Naive thymus-derived CD8-positive, alpha-beta T cell (primary cell): ENCODE measurements at regions of chr2 and their contacts with region 1.

Region 1: DNA sequence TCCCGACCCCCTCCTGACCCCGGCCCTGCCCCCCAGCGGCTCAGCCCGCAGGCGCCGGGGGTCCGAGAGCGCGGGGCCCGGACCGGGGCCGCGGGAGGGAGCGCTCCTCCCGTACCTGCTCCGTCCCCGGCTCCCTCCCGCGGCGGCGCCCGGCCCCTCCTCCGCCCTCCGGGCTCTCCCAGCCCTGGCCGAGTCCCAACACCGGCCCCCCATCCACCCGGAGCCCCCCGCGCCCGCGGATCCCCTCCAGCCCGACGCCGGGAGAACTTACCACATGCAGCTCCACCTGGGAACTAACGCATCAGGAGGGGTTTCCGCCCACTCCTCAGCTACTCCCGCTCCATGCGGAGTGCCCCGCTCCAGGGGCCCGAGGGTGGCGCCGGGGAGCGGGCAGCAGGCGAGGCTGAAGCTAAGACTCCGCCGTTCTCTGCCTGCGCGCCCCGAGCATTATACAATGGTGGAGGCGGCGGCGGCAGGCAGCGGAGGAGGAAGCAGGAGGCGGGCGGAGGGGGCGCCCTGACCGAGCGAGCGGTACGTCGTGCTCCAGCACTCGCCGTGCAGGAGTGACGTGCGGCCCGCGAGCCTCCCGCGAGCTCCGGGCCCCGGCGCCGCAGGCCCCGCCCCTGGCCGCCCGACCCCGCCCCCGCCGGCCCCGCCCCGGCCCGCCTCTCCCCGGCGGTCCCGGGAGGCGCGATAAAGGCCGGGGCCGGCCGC is at the start of gene SERTAD2:
- DNase-seq: peak; percentile 83 to 94 (median 86)
- ATAC-seq: peak; percentile 86 to 87
- H3K4me3 Mint-ChIP-seq: peak within 1 kb of the TSS; percentile 85 to 98 (median 92)
- H3K27ac Mint-ChIP-seq: peak within 1 kb of the TSS; percentile 82 to 98 (median 94)
- H3K4me1 Mint-ChIP-seq: peaks cover 37 to 83% (median 76%) of the 10 kb centered on the region in 4 donors
- H3K27me3 Mint-ChIP-seq: no peaks in the 10 kb centered on the region
- polyA plus RNA-seq, gene SERTAD2: 5.5 to 9.2 (median 6.1) TPM

Region 2: DNA sequence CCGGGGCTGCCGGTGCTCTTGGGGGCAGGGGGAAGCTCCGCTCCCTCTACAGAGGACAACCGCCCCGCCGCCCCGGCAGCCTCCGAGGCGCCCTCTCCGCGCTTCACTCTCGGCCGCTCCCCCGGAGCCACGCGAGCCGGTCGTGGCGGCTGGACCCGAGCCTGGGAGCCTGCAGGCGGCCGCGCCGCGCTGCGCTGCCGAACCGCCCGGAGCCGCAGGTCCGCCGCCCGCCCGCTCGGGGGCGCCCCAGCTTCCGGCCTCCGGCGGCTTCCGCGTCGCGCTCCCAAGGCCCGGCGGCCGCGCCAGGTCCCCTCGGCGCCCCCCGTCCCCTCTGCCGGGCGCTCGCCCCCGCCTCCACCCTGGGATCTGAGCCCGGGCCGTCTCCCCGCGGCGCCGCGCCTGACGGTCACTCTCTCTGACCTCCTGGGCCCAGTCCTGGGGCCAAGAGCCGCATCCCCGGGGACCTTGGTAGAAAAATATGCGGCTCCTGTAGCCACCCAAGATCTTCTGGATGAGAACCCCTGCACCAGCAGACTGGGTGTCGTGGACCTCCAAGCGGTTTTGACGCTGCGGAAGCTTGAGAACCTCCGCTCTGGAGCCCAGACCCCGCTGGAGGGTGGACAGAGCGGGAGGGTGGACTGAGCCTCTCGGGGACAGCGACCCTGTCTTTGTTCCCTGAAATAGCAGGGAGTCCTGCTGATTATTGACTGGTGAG is 44.1 kb before region 1 on chr2:
- POLR2A ChIA-PET with region 1: interaction called, 42 read pairs
- DNase-seq: peak; percentile 47 to 80 (median 74)
- ATAC-seq: peak; percentile 67 to 84
- H3K4me3 Mint-ChIP-seq: peak overlapping the region; percentile 61 to 89 (median 78)
- H3K27ac Mint-ChIP-seq: peak overlapping the region; percentile 60 to 90 (median 80)
- H3K4me1 Mint-ChIP-seq: peaks cover 4 to 30% (median 25%) of the 10 kb centered on the region in 4 donors
- H3K27me3 Mint-ChIP-seq: no peaks in the 10 kb centered on the region

Region 3: GRCh38 chr2:64666810-64667438 is 13.4 kb after region 1 on chr2:
- POLR2A ChIA-PET with region 1: interaction called, 240 read pairs
- DNase-seq: peak in 2 of 10 donors; percentile 40 to 43
- ATAC-seq: peak; percentile 83 to 85
- H3K4me3 Mint-ChIP-seq: peak overlapping the region in 9 of 10 donors; percentile 11 to 78 (median 59)
- H3K27ac Mint-ChIP-seq: peak overlapping the region in 4 of 10 donors; percentile 26 to 91 (median 84)
- H3K4me1 Mint-ChIP-seq: peaks cover 28 to 51% (median 37%) of the 10 kb centered on the region in 4 donors
- H3K27me3 Mint-ChIP-seq: no peaks in the 10 kb centered on the region

Region 4: GRCh38 chr2:64695721-64696261 is 42.3 kb after region 1 on chr2:
- POLR2A ChIA-PET with region 1: interaction called, 16 read pairs
- DNase-seq: no peak
- ATAC-seq: peak in 1 of 2 donors; percentile 40
- H3K4me3 Mint-ChIP-seq: no peak overlapping the region
- H3K27ac Mint-ChIP-seq: peak overlapping the region in 1 of 10 donors; percentile 69
- H3K4me1 Mint-ChIP-seq: peaks cover 14 to 35% (median 29%) of the 10 kb centered on the region in 4 donors
- H3K27me3 Mint-ChIP-seq: no peaks in the 10 kb centered on the region

Region 5: GRCh38 chr2:64750817-64751285 is 97.3 kb after region 1 on chr2:
- POLR2A ChIA-PET with region 1: interaction called, 277 read pairs
- DNase-seq: peak; percentile 92 to 99 (median 97)
- ATAC-seq: peak; percentile 83 to 86
- H3K4me3 Mint-ChIP-seq: peak overlapping the region; percentile 88 to 100 (median 98)
- H3K27ac Mint-ChIP-seq: peak overlapping the region; percentile 91 to 99 (median 96)
- H3K4me1 Mint-ChIP-seq: peaks cover 12 to 29% (median 25%) of the 10 kb centered on the region in 4 donors
- H3K27me3 Mint-ChIP-seq: no peaks in the 10 kb centered on the region

Region 6: GRCh38 chr2:64819774-64820696 is 166.5 kb after region 1 on chr2:
- POLR2A ChIA-PET with region 1: interaction called, 61 read pairs
- DNase-seq: peak in 9 of 10 donors; percentile 7 to 84 (median 58)
- ATAC-seq: peak; percentile 97 to 98
- H3K4me3 Mint-ChIP-seq: peak overlapping the region; percentile 44 to 89 (median 76)
- H3K27ac Mint-ChIP-seq: peak overlapping the region; percentile 91 to 100 (median 97)
- H3K4me1 Mint-ChIP-seq: peaks cover 18 to 55% (median 42%) of the 10 kb centered on the region in 4 donors
- H3K27me3 Mint-ChIP-seq: no peaks in the 10 kb centered on the region

Region 7: GRCh38 chr2:64914735-64915509 is 261.4 kb after region 1 on chr2:
- POLR2A ChIA-PET with region 1: no interaction called
- DNase-seq: no peak
- ATAC-seq: no peak
- H3K4me3 Mint-ChIP-seq: no peak overlapping the region
- H3K27ac Mint-ChIP-seq: peak overlapping the region in 2 of 10 donors; percentile 59 to 77
- H3K4me1 Mint-ChIP-seq: peaks cover 5 to 35% (median 25%) of the 10 kb centered on the region in 4 donors
- H3K27me3 Mint-ChIP-seq: no peaks in the 10 kb centered on the region